ENCODE measurements at regions of chr22 and their contacts with region 1.

Region 1: GRCh38 chr22:30386960-30387827 is at the start of gene RNF215:
- DNase-seq: peak; percentile 66 to 86 (median 80)
- H3K4me3 ChIP-seq: peak within 1 kb of the TSS in 1 of 4 donors; percentile 78
- H3K27ac ChIP-seq: peak within 1 kb of the TSS in 1 of 5 donors; percentile 95
- H3K4me1 ChIP-seq: peaks cover 0 to 13% of the 10 kb centered on the region in 2 donors
- H3K27me3 ChIP-seq: no peaks in the 10 kb centered on the region
- CTCF ChIP-seq: peak; percentile 79 to 98 (median 88)
- POLR2A ChIP-seq: no peak
- total RNA-seq, gene RNF215: 7.7 to 20.1 (median 10.1) TPM

Region 2: GRCh38 chr22:30104501-30105156 is 282.6 kb before region 1 on chr22:
- intact Hi-C with region 1: loop called (anchors 5 to 10 kb)
- DNase-seq: no peak
- H3K4me3 ChIP-seq: no peak overlapping the region
- H3K27ac ChIP-seq: no peak overlapping the region
- H3K4me1 ChIP-seq: no peaks in the 10 kb centered on the region
- H3K27me3 ChIP-seq: no peaks in the 10 kb centered on the region
- CTCF ChIP-seq: no peak
- POLR2A ChIP-seq: no peak

Region 3: GRCh38 chr22:30262917-30263741 is 124.1 kb before region 1 on chr22:
- intact Hi-C with region 1: loop called (anchors 5 kb)
- DNase-seq: peak; percentile 63 to 83 (median 77)
- H3K4me3 ChIP-seq: peak overlapping the region in 1 of 4 donors; percentile 30
- H3K27ac ChIP-seq: no peak overlapping the region
- H3K4me1 ChIP-seq: peaks cover 0 to 9% of the 10 kb centered on the region in 2 donors
- H3K27me3 ChIP-seq: no peaks in the 10 kb centered on the region
- CTCF ChIP-seq: peak; percentile 92 to 100 (median 98)
- POLR2A ChIP-seq: no peak

Region 4: DNA sequence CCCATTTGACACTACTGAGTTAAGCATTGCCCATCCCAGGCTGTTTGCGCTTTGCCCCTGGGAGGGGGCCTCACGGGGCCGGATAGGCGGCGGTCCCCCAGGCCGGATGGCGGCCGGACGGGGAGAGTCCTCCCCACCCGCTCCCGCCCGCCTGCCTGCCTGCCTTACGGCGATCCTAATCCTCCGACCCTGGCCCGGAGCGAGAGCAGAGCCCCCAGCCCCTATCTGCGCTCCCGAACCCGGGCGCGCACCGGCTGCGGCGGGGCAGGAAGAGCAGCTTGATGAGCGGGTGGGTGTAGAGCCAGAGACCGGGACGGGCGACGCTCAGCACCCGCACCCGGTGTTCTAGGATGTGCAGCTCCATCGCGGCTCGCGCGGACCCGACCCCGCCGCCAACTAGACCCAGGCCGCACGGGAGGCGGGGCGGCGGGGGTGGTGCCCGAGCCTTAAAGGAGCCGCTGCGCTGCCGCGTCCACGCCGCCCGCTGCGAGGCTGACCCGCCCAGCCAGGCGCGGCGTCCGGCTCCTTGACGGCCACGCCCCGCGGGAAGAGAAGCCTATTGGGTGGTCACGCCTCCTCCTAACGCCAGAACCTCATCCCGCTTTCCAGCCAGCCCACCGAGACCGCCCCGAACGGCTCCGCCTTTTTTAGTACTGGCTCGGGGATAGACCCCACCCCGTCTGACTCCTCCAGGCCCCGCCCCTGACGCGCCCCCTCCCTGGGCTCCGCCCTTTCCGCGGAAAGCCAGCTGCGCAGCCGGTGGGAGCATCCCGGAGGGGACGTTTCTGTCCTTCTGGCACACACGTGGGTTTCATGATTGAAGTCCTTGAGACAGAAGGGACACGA is 97.8 kb before region 1 on chr22 and contains the start of gene CASTOR1:
- intact Hi-C with region 1: loop called (anchors 2 to 5 kb)
- DNase-seq: peak; percentile 98 to 99 (median 99)
- H3K4me3 ChIP-seq: peak within 1 kb of the TSS; percentile 42 to 53 (median 51)
- H3K27ac ChIP-seq: peak within 1 kb of the TSS; percentile 71 to 92 (median 87)
- H3K4me1 ChIP-seq: peaks cover 30 to 40% of the 10 kb centered on the region in 2 donors
- H3K27me3 ChIP-seq: no peaks in the 10 kb centered on the region
- CTCF ChIP-seq: peak in 1 of 6 experiments; percentile 6
- POLR2A ChIP-seq: peak; percentile 57 to 72
- total RNA-seq, gene CASTOR1: 5.5 to 20.1 (median 15.0) TPM

Region 5: DNA sequence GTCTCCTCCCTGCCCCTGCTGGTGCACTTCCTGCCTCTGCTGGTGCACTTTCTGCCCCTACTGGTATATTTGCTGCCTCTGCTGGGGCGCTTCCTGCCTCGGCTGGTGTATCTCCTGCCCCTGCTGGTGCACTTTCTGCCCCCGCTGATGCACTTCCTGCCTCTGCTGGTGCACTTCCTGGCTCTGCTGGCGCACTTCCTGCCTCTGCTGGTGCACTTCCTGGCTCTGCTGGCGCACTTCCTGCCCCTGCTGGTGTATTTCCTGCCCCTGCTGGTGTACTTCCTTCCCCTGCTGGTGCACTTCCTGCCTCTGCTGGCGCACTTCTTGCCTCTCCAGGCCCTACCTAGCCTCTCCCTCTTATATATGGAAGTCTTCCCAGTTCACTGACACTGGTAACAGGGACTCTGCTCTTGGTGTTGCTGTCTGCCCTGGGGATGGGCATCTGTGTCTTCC is 48.5 kb after region 1 on chr22:
- intact Hi-C with region 1: no loop called
- DNase-seq: peak in 3 of 7 donors; percentile 34 to 65 (median 43)
- H3K4me3 ChIP-seq: no peak overlapping the region
- H3K27ac ChIP-seq: peak overlapping the region in 2 of 5 donors; percentile 49 to 68
- H3K4me1 ChIP-seq: no peaks in the 10 kb centered on the region
- H3K27me3 ChIP-seq: no peaks in the 10 kb centered on the region
- CTCF ChIP-seq: no peak
- POLR2A ChIP-seq: no peak

Region 6: DNA sequence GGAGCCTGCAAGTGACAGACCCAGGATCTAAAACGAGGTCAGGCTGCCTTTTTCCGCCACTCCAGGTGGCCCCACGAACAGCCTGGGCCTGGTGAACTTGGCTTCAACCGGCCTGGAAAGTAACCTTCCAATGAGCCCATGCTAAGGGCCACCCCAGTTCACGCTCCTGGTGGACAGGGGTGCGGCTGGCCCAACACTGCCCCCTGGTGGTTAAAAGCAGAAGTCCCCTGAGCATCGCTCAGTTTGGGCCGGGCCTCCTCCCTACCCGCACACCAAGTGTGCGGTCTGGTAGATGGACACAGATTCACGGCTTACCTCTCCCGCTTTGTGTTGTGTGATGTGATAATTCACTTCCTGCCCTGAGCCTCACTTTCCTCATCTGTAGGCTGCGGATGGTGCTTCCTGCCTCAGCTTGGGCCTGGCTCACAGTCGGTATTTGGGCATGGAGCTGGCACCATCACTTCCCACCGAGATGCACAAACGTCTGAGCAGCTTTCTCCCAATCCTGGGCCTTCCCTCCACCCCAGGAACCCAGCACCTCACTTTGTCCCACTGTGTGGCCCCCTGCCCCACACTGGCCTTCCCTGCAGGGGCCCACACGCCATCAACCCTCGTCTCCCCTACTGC is 98.3 kb after region 1 on chr22:
- intact Hi-C with region 1: loop called (anchors 2 to 5 kb)
- DNase-seq: peak; percentile 60 to 81 (median 72)
- H3K4me3 ChIP-seq: no peak overlapping the region
- H3K27ac ChIP-seq: no peak overlapping the region
- H3K4me1 ChIP-seq: no peaks in the 10 kb centered on the region
- H3K27me3 ChIP-seq: no peaks in the 10 kb centered on the region
- CTCF ChIP-seq: peak; percentile 93 to 99 (median 95)
- POLR2A ChIP-seq: no peak

Region 7: GRCh38 chr22:30574997-30575671 is 187.9 kb after region 1 on chr22:
- intact Hi-C with region 1: no loop called
- DNase-seq: peak in 2 of 7 donors; percentile 4 to 57
- H3K4me3 ChIP-seq: no peak overlapping the region
- H3K27ac ChIP-seq: peak overlapping the region in 1 of 5 donors; percentile 40
- H3K4me1 ChIP-seq: peaks cover 0 to 4% of the 10 kb centered on the region in 2 donors
- H3K27me3 ChIP-seq: no peaks in the 10 kb centered on the region
- CTCF ChIP-seq: no peak
- POLR2A ChIP-seq: no peak